ENCODE measurements at regions of chr11 and their contacts with region 1.

Region 1: DNA sequence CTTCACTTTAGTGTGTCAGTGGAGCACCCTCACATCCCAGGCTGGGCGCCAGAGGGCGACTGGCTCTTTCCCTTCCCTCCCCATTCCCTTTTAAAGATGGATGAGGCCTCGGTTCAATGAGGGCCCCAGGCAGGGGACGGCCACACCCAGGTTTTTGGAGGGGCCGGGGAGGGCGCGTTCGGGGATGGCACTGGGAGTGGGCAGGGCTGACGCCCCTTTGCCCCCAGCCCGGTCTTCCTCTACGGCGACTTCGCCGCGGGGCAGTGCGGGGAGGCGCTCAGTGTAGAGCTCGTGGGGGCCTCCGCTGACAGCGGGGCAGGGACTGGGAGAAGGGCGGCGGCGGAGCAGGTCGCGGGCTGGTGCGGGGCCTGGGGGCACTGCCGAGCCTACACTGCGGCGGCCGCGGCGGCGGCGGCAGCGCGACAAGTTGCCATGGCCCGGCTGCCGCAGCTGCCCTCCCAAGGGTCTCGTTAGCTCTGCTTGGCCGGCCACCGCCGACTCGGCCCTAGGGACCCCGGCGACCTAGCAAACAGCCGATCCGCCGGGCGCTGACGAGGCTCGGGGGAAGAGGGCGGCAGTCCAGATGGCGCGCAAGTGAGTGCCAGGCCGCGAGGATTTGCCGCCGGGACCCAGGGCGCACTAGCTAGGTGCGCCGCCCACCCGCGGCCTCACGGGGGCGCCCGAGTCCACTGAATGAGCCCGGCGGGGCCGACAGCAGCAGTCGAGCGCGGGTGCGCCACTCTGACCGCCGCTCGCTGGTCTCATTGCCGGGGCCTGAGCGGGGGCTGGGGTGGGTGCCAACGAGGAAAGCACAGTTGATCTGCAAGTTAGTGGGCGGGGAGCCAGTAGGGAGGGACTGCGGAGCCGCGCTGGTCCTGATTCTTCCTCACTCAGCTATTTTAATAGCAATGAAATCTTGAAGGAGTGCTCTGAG is 92.7 kb downstream of the RRM1 start:
- DNase-seq: peak; percentile 89

Region 2: DNA sequence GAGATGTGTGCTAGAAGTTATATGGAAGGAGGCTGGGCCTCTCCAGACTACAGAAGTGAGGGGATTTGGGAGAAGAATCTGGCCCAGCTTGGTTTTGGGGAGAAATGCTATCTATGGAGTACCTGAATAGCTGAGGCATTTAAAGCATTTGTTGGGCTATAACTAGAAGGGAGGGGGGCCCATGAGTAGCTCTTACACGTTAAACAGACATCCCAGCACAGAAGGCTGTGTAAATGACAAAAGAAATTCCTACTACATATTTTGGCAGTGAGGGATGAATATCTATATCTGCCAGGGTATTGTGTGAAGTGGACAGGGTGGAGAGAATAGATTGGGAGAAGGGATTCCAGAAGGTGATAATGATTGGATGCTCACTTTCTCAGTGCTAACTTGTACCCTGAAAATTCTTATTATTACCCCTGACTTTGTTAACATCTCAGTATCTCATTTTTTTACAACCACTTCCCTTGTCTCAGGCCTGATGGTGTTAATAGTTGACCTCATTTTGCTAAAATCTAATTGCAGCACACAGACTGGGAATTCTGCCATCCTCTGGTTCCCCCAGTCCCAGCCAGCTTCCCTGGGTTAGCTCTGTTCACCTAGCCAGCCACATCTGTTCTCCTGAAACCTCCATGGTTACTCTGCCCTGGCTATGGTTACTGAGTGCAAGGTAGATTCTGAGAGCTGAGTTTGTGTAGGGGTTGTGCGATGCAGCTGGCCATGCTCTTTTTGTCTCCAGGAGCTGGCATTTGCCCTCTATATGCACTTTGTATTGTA is 121.5 kb before region 1 on chr11:
- in situ Hi-C with region 1: no loop called
- DNase-seq: no peak

Region 3: DNA sequence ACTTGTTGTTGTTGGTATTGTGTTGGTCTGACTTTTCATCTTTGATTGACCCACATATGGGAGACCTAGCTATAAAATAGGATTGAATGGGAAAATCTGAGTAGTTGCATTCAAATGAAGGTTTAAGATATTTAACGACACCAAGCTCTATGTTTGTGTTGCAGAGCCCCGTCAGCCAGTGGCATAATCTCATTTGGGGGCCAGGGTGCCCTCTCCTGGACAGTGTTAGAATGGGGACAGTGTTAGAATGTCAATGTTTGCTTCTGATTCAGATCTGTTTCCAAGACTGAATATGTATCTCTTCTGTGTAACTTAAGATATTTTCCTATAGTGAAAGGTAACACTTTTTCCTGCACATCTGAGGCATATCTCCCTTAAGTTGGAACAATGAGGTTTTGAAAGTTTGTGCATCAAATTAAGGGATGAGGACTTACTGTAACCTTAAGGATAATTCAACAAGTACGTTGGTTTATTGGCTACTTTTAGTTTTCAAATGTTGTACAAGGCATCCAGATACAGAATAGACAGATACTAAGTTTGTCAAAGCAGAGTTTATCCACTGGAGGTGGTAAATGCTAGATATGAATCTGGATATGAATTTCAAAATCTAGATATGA is 352.4 kb after region 1 on chr11:
- in situ Hi-C with region 1: loop called (anchors 25 kb)
- DNase-seq: peak; percentile 54

Region 4: GRCh38 chr11:5004424-5005274 is 817.3 kb after region 1 on chr11:
- in situ Hi-C with region 1: loop called (anchors 25 kb)
- DNase-seq: peak; percentile 44